GM13977 (cell line): ENCODE measurements at regions of chr11 and their contacts with region 1.

Region 1: GRCh38 chr11:7688238-7688826 is 15.0 kb upstream of the CYB5R2 start:
- DNase-seq: no peak
- CTCF ChIP-seq: peak; percentile 87

Region 2: DNA sequence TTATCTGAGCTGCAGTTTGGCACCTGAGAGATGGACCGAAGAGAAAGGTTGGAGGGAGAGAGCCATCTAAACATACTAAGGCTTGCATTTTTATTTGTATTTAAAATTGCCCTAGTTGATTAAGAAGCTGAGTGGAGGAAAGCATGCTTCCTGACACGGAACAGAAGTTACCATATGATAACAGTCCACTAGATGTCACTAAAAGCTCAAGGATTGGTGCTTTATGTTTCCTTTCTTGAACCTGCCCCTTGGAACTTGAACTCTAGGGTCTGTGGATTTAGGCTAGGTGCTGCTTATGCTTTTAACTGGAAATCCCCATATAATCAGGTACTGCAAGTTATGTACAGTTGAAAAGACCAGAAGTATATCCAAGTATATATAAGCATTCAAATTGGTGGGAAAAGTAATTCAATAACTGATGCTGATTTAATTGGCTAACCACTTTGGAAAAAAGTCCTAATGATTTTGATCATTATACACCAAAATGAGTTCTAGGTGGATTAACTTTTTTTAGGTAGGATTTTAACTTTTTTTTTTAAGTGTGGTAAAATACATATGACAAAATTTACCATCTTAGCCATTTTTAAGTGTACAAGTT is 590.0 kb before region 1 on chr11:
- in situ Hi-C with region 1: loop called (anchors 10 kb)
- DNase-seq: peak; percentile 54
- CTCF ChIP-seq: peak; percentile 64

Region 3: DNA sequence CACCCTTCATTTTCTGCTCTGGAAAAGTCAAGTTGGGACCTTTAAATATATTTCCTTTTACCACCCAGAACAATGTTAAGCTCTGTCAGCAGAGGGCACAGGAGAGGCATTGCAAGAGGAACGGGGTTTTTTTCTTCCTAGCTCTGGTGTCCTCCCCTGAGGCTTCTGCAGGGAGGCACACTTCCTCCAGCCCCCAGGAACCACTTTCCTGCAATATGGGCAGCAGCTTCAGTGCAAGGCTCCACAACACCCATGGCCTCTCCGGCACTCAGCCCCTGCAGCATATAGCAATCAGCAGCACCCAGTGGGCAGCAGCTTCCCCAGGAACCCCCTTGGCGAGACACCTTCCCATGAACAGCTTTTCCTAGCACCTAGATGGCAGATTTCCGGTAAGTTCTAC is 335.2 kb before region 1 on chr11:
- in situ Hi-C with region 1: loop called (anchors 10 kb)
- DNase-seq: peak; percentile 45
- CTCF ChIP-seq: peak; percentile 71

Region 4: DNA sequence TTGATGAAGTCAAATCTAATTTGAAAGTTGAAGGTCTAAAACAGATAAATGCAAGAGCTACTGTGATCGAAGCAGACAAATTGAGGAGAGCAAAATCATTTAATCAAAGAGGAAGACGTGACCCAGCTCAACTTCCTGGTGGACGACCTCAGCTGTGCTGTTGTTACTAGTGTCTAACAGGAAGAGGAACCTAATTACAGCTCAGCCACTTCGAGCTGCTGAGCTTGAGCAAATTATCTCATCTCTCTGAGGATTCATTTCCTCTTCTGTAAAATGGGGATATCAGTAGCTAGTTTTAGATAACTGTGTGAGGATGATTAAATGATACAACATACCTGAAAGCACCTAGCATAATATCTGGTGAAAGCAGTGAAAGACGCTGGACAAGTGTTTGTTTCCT is 251.7 kb before region 1 on chr11:
- in situ Hi-C with region 1: loop called (anchors 10 kb)
- DNase-seq: peak; percentile 48
- CTCF ChIP-seq: no peak

Region 5: DNA sequence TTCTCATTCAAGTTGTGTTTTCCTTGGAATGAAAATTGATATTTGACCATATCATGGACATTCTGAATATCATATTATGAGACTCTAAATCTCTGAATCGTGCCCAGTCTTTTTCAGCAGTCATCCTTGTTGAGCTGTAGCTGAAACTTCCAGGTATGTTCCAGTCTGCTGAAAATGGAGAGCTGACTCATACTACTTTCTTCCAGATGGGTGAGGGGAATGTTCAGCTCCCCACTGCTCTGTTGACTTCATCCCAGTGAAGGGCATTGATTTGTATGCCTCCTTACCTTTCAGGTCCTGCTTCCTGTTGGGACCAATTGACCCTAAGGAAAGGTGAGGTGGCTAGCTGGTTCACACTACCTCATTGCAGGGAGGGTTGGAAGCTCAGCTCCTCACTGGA is 104.9 kb after region 1 on chr11:
- in situ Hi-C with region 1: no loop called
- DNase-seq: no peak
- CTCF ChIP-seq: no peak

Region 6: GRCh38 chr11:7927635-7928034 is 239.3 kb after region 1 on chr11:
- in situ Hi-C with region 1: no loop called
- DNase-seq: no peak
- CTCF ChIP-seq: no peak